Esophagus muscularis mucosa (tissue), 4 donors: ENCODE measurements at regions of chr16 and their contacts with region 1.

Region 1: GRCh38 chr16:81204798-81205680 is 33.5 kb upstream of the BCO1 start:
- DNase-seq: no peak
- H3K4me3 ChIP-seq: no peak overlapping the region
- H3K27ac ChIP-seq: no peak overlapping the region
- H3K4me1 ChIP-seq: peaks cover 0 to 6% (median 0%) of the 10 kb centered on the region in 4 donors
- H3K27me3 ChIP-seq: peaks cover 0 to 15% (median 0%) of the 10 kb centered on the region in 4 donors
- CTCF ChIP-seq: peak; percentile 50 to 73 (median 57)
- EP300 ChIP-seq: no peak
- POLR2A ChIP-seq: no peak

Region 2: GRCh38 chr16:81314603-81315270 is 109.7 kb after region 1 on chr16 and contains the start of gene GAN:
- intact Hi-C with region 1: loop called (anchors 5 kb)
- DNase-seq: peak; percentile 99
- H3K4me3 ChIP-seq: peak within 1 kb of the TSS; percentile 88 to 93 (median 90)
- H3K27ac ChIP-seq: peak within 1 kb of the TSS; percentile 91 to 96 (median 94)
- H3K4me1 ChIP-seq: peaks cover 30 to 65% (median 47%) of the 10 kb centered on the region in 4 donors
- H3K27me3 ChIP-seq: no peaks in the 10 kb centered on the region
- CTCF ChIP-seq: no peak
- EP300 ChIP-seq: no peak
- POLR2A ChIP-seq: peak; percentile 73
- total RNA-seq, gene GAN: 9.6 to 14.8 (median 11.7) TPM

Region 3: DNA sequence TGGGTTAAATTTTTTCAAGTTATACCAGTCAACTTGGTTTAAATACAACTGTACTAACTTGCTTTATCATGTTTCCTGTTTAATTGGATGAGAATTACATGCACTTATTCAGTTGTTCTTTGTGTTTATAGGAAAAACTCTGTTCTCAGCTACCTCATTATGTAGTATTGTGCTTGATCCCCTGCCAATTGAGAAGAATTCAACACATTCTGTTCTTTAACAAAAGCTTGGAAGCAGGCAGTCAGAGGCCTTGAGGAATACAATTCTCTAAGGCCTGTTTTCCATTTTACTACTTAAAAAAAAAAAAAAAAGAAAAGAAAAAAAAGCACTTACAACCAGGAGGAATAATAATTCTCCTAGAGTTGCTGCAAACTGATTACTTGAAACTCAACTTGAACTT is 179.0 kb after region 1 on chr16:
- intact Hi-C with region 1: no loop called
- DNase-seq: no peak
- H3K4me3 ChIP-seq: no peak overlapping the region
- H3K27ac ChIP-seq: peak overlapping the region; percentile 69 to 83 (median 80)
- H3K4me1 ChIP-seq: peaks cover 16 to 47% (median 35%) of the 10 kb centered on the region in 4 donors
- H3K27me3 ChIP-seq: no peaks in the 10 kb centered on the region
- CTCF ChIP-seq: no peak
- EP300 ChIP-seq: no peak
- POLR2A ChIP-seq: no peak

Region 4: GRCh38 chr16:81737885-81738786 is 533.1 kb after region 1 on chr16:
- intact Hi-C with region 1: loop called (anchors 5 kb)
- DNase-seq: peak; percentile 94
- H3K4me3 ChIP-seq: peak overlapping the region; percentile 23 to 43 (median 31)
- H3K27ac ChIP-seq: peak overlapping the region in 3 of 4 donors; percentile 24 to 64 (median 52)
- H3K4me1 ChIP-seq: peaks cover 0 to 12% (median 11%) of the 10 kb centered on the region in 4 donors
- H3K27me3 ChIP-seq: no peaks in the 10 kb centered on the region
- CTCF ChIP-seq: peak; percentile 82 to 90 (median 89)
- EP300 ChIP-seq: no peak
- POLR2A ChIP-seq: no peak